Left lung (tissue), 14 donors: ENCODE measurements at regions of chr3 and their contacts with region 1.

Region 1: GRCh38 chr3:39180546-39181346 is 11.6 kb downstream of the XIRP1 start:
- DNase-seq: peak; percentile 75 to 98 (median 94)
- ATAC-seq: peak; percentile 83
- H3K4me3 ChIP-seq: peak overlapping the region; percentile 12 to 39
- H3K27ac ChIP-seq: peak overlapping the region; percentile 72 to 92
- H3K4me1 ChIP-seq: peaks cover 18 to 63% of the 10 kb centered on the region in 2 donors
- H3K27me3 ChIP-seq: no peaks in the 10 kb centered on the region
- CTCF ChIP-seq: peak in 1 of 2 donors; percentile 41

Region 2: GRCh38 chr3:39146984-39147591 is 33.7 kb before region 1 on chr3:
- intact Hi-C with region 1: loop called in 1 of 2 experiments (anchors 5 kb)
- DNase-seq: peak in 2 of 4 donors; percentile 86 to 94
- ATAC-seq: peak; percentile 60
- H3K4me3 ChIP-seq: peak overlapping the region in 1 of 2 donors; percentile 93
- H3K27ac ChIP-seq: peak overlapping the region; percentile 89 to 99
- H3K4me1 ChIP-seq: peaks cover 62 to 99% of the 10 kb centered on the region in 2 donors
- H3K27me3 ChIP-seq: no peaks in the 10 kb centered on the region
- CTCF ChIP-seq: no peak

Region 3: GRCh38 chr3:39651993-39652739 is 471.4 kb after region 1 on chr3:
- intact Hi-C with region 1: no loop called
- DNase-seq: no peak
- ATAC-seq: no peak
- H3K4me3 ChIP-seq: no peak overlapping the region
- H3K27ac ChIP-seq: no peak overlapping the region
- H3K4me1 ChIP-seq: no peaks in the 10 kb centered on the region
- H3K27me3 ChIP-seq: no peaks in the 10 kb centered on the region
- CTCF ChIP-seq: no peak